ENCODE measurements at regions of chr9 and their contacts with region 1.

Region 1: DNA sequence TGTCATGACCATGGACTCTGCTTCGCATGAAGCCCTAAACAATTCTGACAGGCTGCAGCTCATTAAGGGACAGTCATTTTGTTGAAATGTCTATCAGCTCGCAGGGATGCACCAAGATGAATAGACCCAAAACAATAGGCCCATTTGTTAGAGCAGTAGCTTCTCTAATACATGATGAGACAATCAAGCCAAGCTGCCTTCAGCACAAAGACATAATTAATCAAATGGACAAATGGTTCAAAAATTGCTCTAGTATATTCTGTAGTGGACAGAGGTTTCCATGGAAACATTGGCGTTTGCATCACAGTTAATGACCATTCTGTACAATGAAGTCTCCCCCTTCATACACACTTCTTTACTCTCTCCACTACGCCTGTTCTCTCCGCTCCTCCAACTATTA is 274.6 kb downstream of the ANXA1 start:
- DNase-seq: no peak
- H3K4me3 Mint-ChIP-seq: no peak overlapping the region
- H3K27ac Mint-ChIP-seq: no peak overlapping the region
- H3K4me1 Mint-ChIP-seq: no peaks in the 10 kb centered on the region
- H3K27me3 Mint-ChIP-seq: no peaks in the 10 kb centered on the region

Region 2: GRCh38 chr9:72773570-72773969 is 652.7 kb before region 1 on chr9:
- intact Hi-C with region 1: no loop called
- DNase-seq: no peak
- H3K4me3 Mint-ChIP-seq: no peak overlapping the region
- H3K27ac Mint-ChIP-seq: no peak overlapping the region
- H3K4me1 Mint-ChIP-seq: no peaks in the 10 kb centered on the region
- H3K27me3 Mint-ChIP-seq: peaks cover 3% of the 10 kb centered on the region

Region 3: DNA sequence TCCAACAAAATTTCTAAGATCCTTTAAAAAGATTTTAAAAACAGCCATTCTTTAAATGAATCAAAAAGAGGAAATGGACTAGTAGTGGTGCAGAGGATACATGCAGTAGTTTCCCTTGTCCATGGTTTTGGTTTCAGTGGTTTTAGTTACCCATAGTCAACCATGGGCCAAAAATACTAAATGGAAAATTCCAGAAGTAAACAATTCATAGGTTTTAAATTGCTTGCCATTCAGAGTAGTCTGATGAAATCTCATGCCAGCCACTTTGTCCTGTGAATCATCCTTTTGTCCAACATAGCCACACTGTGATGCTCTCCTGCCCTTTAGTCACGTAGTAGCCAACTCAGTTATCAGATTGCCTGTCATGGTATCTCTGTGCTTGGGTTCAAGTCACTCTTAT is 11.5 kb after region 1 on chr9:
- intact Hi-C with region 1: loop called (anchors 1 kb)
- DNase-seq: no peak
- H3K4me3 Mint-ChIP-seq: no peak overlapping the region
- H3K27ac Mint-ChIP-seq: no peak overlapping the region
- H3K4me1 Mint-ChIP-seq: no peaks in the 10 kb centered on the region
- H3K27me3 Mint-ChIP-seq: no peaks in the 10 kb centered on the region